ENCODE measurements at regions of chr12 and their contacts with region 1.

Region 1: DNA sequence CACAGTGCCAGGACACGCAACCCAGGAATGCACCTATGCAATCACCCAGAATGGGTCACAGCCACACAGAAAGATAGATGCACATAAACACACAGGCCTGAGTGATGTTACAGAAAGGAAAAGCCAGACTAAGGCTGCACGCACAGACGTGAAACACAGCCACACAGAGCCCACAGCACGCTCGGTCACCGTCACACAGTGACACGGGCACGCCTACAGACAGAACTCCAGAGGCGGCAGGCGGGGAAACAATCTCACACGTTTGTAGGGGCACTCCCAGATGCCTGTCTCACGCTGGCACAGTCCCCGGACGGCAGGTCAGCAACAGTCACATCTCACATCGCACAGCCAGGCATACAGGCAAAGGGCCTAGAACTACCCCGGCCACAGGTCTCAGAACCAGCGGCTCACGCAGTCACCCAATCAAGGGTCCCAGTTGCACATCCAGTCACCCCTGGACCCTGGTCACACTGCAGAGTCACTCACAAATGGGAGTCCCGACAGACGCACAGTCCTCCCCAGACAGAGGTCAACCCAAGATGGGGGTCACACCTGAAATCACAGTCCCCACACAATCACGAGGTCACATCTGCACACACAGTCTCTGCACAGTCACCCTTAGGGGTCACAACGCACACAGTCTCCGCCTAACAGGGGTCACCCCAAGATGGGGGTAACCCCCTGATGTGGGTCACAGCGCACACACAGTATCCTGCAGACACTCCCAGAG is 790 bp downstream of the SSH1 start:
- DNase-seq: peak; percentile 90
- ATAC-seq: peak; percentile 62

Region 2: GRCh38 chr12:108562348-108563135 is 294.1 kb before region 1 on chr12 and contains the start of gene ISCU:
- intact Hi-C with region 1: loop called (anchors 2 kb)
- DNase-seq: peak; percentile 98
- ATAC-seq: peak; percentile 91
- total RNA-seq, gene ISCU: 444 TPM

Region 3: GRCh38 chr12:108664338-108665258 is 192.0 kb before region 1 on chr12:
- intact Hi-C with region 1: loop called (anchors 2 kb)
- DNase-seq: peak; percentile 77
- ATAC-seq: peak; percentile 91

Region 4: GRCh38 chr12:108750526-108751402 is 105.8 kb before region 1 on chr12:
- intact Hi-C with region 1: no loop called
- DNase-seq: no peak
- ATAC-seq: peak; percentile 33

Region 5: DNA sequence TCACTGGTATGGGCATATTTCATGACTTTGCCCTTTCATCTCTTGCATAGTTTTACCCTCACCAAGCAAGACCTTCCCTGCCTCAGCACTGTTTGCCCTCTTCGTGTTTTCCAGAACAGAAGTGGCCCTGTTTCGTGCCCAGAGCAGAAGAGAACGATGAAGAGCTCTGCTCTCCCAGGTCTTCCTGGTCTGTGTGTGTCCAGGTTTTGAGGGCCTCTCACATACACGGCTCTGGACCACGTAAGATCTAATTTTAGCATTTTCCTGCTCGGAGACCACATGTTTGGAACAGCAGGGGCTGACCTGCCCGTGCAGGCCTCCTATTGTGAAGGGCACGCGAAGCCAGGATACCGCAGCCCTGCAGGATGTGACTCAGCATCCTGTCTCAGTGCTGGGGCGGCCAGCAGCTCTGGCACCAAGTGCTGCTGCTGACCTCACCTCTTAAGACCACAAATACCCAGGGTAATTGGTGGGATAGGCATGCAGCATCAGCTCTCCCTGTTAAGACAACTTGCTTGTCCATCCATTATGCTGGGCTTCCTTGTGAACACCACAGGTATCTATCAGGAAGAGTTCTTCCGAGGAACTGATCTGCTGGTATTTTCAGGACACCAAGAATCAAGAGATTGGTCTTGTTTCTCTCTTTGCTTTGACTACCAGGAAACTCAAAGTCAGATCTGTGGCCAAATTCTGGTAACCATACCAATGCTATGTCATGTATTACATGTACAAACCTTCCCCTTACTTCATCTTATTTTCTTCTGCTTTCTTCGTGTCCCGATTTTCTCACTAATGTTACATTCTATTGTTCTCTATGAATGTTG is 18.2 kb before region 1 on chr12:
- intact Hi-C with region 1: loop called (anchors 2 kb)
- DNase-seq: peak; percentile 95
- ATAC-seq: peak; percentile 86

Region 6: GRCh38 chr12:109309381-109310246 is 453.0 kb after region 1 on chr12:
- intact Hi-C with region 1: no loop called
- DNase-seq: no peak
- ATAC-seq: no peak